IMR-90 (cell line): ENCODE measurements at regions of chr3 and their contacts with region 1.

Region 1: DNA sequence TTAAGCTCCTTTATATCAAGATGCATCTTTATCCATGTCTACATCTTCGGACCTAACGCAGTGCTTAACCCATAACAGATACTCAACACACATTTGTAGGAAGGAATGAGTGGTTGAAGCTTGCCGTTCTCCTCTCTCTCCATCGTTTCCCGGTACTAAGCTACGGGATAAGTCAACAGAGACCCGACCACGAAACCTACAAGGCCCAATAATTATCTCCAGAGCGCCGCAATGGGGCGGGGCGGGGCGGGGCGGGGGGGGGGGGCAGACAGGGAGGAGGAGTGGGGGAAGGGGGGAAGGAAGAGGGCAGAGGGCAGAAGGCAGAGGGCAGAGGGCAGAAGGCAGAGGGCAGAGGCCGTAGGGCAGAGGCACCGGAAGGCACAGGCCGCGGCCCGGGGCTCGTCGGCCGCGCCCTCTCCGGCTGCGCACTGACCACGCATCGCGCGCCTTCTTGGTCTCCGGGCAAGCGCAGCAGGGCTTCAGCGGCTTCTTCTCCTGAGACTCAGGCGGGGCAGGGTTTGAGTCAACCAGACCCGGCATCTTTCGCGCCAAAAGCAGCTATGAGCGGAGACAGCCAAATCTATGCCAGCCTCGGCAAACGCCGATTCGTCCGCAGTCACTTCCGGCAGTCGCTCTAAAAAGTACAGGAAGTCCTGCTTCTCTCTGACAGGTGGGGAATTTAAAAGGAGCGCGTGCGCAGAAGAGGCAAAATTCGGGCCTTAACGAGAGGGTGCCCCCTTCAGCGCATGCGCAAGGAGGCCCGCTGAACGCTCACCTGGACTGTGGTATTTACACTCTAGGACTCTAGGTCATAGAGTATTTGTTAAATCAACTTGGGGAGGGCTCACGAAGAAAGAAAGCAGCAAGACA is at the start of gene COX17:
- DNase-seq: peak; percentile 94
- ATAC-seq: peak; percentile 90
- H3K4me3 ChIP-seq: peak within 1 kb of the TSS; percentile 85
- H3K27ac ChIP-seq: peak within 1 kb of the TSS; percentile 46
- H3K4me1 ChIP-seq: no peaks in the 10 kb centered on the region
- H3K27me3 ChIP-seq: no peaks in the 10 kb centered on the region
- CTCF ChIP-seq: no peak
- POLR2A ChIP-seq: peak; percentile 68; the same call in 1 of the 2 replicates
- RAD21 ChIP-seq: no peak
- total RNA-seq, gene COX17: 2.0 and 8.6 TPM in 2 replicates

Region 2: DNA sequence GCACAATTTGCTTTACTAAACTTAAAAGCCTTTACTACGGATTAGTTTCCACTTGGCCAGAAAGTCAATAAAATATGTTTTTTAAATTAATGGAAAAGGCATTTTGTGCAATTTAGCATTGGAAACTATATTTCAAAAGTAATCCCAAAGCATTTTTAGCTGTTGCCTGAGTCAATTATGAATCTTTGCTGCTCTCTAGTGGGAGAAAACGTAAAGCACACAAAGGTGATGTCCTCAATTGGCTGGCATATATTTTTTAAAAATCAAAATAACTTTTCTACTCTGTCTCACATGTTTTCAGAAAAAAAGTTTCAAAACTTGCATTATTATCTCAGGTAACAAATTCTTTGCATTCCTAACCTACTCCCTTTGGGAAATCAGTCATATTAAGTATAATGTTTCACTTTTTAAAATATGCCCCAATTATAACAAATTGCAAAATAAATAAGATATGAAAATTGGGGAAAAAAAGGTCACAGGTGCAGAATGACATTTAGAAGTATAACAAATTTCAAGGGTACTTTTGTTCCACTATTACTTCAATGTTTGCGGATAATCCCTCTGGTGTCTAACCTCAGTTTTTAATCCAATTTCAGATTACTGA is 578.3 kb before region 1 on chr3:
- CTCF ChIA-PET with region 1: no interaction called
- POLR2A ChIA-PET with region 1: no interaction called
- dilution Hi-C with region 1: no loop called
- in situ Hi-C with region 1: no loop called
- intact Hi-C with region 1: loop called (anchors 5 kb)
- DNase-seq: peak; percentile 40
- ATAC-seq: peak; percentile 42; the same call in 1 of the 2 replicates
- H3K4me3 ChIP-seq: no peak overlapping the region
- H3K27ac ChIP-seq: no peak overlapping the region
- H3K4me1 ChIP-seq: no peaks in the 10 kb centered on the region
- H3K27me3 ChIP-seq: no peaks in the 10 kb centered on the region
- CTCF ChIP-seq: peak; percentile 86
- POLR2A ChIP-seq: no peak
- RAD21 ChIP-seq: peak; percentile 80

Region 3: DNA sequence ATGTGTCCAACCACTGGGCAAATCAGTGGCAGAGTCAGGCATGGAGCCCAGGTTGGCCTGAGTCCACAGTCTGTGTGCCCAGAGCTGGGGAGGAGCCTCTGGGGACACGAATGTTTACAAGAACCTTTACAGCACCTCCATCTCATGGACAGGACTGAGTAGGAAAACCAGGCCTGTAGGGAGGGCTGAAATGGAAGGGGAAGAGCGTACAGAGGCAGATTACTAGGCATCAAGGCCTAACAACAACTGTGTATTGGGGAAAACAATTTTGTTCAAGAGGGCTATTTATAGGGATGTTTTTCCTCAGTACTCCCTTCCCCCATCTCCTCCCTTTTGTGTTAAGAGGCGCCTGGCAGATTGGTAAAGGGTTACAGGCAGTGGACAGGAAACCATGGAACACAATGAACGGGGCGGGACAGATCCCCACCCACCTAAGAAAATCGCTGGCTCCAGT is 397.9 kb before region 1 on chr3:
- CTCF ChIA-PET with region 1: no interaction called
- POLR2A ChIA-PET with region 1: no interaction called
- dilution Hi-C with region 1: no loop called
- in situ Hi-C with region 1: loop called (anchors 25 kb)
- intact Hi-C with region 1: loop called (anchors 1 kb)
- DNase-seq: no peak
- ATAC-seq: no peak
- H3K4me3 ChIP-seq: no peak overlapping the region
- H3K27ac ChIP-seq: no peak overlapping the region
- H3K4me1 ChIP-seq: no peaks in the 10 kb centered on the region
- H3K27me3 ChIP-seq: no peaks in the 10 kb centered on the region
- CTCF ChIP-seq: no peak
- POLR2A ChIP-seq: no peak
- RAD21 ChIP-seq: no peak

Region 4: GRCh38 chr3:119469381-119470189 is 207.4 kb before region 1 on chr3:
- CTCF ChIA-PET with region 1: interaction called, 5 read pairs
- POLR2A ChIA-PET with region 1: interaction called, 5 read pairs
- dilution Hi-C with region 1: no loop called
- in situ Hi-C with region 1: no loop called
- intact Hi-C with region 1: loop called (anchors 2 kb)
- DNase-seq: peak; percentile 47
- ATAC-seq: peak; percentile 10; the same call in 1 of the 2 replicates
- H3K4me3 ChIP-seq: peak overlapping the region; percentile 75
- H3K27ac ChIP-seq: peak overlapping the region; percentile 80; the same call in 1 of the 2 replicates
- H3K4me1 ChIP-seq: peaks cover 3% of the 10 kb centered on the region
- H3K27me3 ChIP-seq: no peaks in the 10 kb centered on the region
- CTCF ChIP-seq: no peak
- POLR2A ChIP-seq: no peak
- RAD21 ChIP-seq: no peak

Region 5: DNA sequence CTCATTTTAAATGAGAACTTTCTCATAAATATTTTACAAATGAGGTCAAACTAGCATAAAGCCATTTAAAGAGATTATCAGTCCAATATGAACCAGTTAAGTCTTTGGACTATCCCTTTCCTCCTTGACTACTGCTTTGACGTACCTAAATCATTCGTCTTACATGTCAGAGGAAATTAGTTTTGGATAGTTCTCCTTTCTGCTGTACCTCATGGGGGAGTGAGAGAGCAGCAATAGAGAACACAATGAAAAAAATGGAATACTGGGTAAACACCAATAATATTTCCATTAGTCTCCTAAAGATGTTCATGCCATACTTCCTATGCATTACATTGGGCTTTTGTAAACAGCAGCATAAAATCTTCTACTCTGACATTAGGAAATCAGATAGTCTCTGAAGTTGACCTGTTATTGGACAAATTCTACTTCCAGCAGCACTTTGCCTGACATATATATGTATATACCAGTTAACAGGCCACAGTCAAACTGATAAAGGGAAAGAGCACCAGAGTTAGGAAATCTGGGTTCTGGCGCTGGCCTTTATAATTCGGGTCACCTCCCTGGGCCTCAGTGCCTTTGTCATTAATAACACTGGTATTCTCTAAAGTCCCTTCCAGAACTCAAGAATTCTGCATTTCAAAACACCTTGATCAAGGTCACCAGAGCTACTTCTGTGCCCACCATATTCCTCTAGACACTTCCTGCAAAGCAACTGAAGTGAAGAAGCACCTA is 151.9 kb before region 1 on chr3:
- CTCF ChIA-PET with region 1: no interaction called
- POLR2A ChIA-PET with region 1: no interaction called
- dilution Hi-C with region 1: no loop called
- in situ Hi-C with region 1: loop called (anchors 25 kb)
- intact Hi-C with region 1: loop called (anchors 2 kb)
- DNase-seq: no peak
- ATAC-seq: peak; percentile 46
- H3K4me3 ChIP-seq: no peak overlapping the region
- H3K27ac ChIP-seq: no peak overlapping the region
- H3K4me1 ChIP-seq: peaks cover under 1% of the 10 kb centered on the region
- H3K27me3 ChIP-seq: no peaks in the 10 kb centered on the region
- CTCF ChIP-seq: peak; percentile 43
- POLR2A ChIP-seq: no peak
- RAD21 ChIP-seq: peak; percentile 46; the same call in 1 of the 2 replicates